GM12878 (cell line): ENCODE measurements at regions of chr9 and their contacts with region 1.

Region 1: DNA sequence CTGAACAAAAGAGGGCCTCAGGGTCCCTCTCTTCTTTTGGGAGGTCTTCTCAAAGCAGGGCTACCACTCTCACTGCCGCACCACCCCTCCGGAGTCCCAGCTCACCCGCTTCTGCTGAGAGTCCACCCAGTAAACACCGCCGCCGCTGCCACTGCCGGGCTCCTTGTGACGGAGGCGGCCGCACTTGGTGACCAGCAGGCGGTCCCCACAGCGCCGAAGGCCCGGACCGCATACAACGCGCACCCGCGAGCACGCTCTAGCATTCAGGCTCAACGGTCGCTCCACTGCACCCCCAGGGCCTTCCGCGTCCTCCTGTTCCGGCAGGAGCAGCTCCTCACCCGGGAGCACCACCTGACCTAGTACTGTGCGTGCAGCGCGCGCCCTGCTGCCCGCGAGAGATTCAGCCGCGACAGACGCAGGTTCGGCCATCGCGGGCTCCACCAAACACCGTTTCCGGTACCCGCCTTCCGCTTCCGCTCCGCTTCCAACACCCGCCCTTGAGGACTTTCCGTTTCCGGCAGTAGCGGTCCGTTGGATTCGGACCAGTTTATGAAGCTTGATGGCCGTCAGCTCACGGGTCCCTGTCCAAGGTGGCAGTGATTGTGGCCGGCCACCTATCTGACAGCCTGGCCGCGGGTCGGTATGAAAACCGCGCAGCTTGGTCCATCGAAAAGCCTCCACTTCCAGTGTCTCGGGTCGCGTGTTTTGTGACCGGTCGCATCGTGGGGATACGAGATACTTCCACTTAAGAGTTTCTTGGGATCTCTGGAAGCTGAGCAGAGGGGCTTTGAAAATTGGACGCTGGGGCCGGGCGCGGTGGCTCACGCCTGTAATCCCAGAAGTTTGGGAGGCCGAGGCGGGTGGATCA is at the start of gene EXOSC3:
- DNase-seq: peak; percentile 62
- ATAC-seq: peak; percentile 93
- H3K4me3 ChIP-seq: peak within 1 kb of the TSS; percentile 77
- H3K27ac ChIP-seq: peak within 1 kb of the TSS; percentile 88
- H3K4me1 ChIP-seq: no peaks in the 10 kb centered on the region
- H3K27me3 ChIP-seq: no peaks in the 10 kb centered on the region
- CTCF ChIP-seq: peak in 2 of 3 experiments; percentile 6 to 14; a peak in 2 of 6 replicates
- EP300 ChIP-seq: no peak
- POLR2A ChIP-seq: peak; percentile 100
- RAD21 ChIP-seq: no peak
- polyA plus RNA-seq, gene EXOSC3: 8.2 to 20.3 TPM

Region 2: GRCh38 chr9:37582548-37583157 is 202.2 kb before region 1 on chr9:
- CTCF ChIA-PET with region 1: interaction called, 4 read pairs
- POLR2A ChIA-PET with region 1: no interaction called
- RAD21 ChIA-PET with region 1: no interaction called
- SMC1A ChIA-PET with region 1: no interaction called
- in situ Hi-C with region 1: no loop called
- intact Hi-C with region 1: loop called (anchors 1 kb)
- DNase-seq: no peak
- ATAC-seq: peak; percentile 77
- H3K4me3 ChIP-seq: no peak overlapping the region
- H3K27ac ChIP-seq: no peak overlapping the region
- H3K4me1 ChIP-seq: no peaks in the 10 kb centered on the region
- H3K27me3 ChIP-seq: no peaks in the 10 kb centered on the region
- CTCF ChIP-seq: peak; percentile 58 to 69 (median 69); a peak in 5 of 6 replicates
- EP300 ChIP-seq: no peak
- POLR2A ChIP-seq: no peak
- RAD21 ChIP-seq: peak; percentile 68

Region 3: DNA sequence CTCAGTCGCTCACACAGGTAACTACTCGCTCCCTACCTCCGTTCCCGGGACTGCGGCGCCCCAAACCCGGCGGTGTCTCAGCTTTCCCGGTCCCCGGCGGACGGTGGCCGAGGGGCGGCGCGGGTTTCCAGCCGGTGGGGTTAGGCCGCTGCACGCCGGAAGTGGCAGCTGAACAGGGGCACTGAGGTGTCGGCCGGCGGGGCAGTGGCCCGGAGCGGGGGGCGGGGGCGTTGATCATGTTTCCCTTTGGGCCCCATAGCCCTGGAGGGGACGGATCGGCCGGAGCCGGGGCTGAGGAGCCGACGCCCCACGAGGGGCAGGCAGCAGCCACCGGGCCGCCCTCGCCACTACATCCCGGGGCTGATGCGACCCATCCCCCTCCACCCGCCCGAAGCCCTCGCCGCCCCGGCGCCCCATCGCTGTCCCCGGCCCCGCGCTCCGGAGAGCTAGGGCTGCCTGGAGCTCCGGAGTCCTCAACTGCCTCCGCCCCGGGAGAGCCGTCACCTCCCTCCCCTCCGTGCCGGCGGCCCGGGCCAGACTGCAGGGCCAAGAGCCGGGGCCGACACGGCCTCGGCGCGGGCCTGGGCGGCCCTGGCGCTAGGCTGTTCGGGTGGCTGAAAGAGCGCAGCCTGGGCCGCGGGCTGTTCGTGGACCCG is 15.9 kb after region 1 on chr9 and contains the start of gene DCAF10:
- CTCF ChIA-PET with region 1: interaction called, 13 read pairs
- POLR2A ChIA-PET with region 1: interaction called, 10 read pairs
- RAD21 ChIA-PET with region 1: interaction called, 11 read pairs
- SMC1A ChIA-PET with region 1: interaction called, 5 read pairs
- in situ Hi-C with region 1: no loop called
- intact Hi-C with region 1: loop called (anchors 2 kb)
- DNase-seq: peak; percentile 40
- ATAC-seq: peak; percentile 89
- H3K4me3 ChIP-seq: peak within 1 kb of the TSS; percentile 80
- H3K27ac ChIP-seq: peak within 1 kb of the TSS; percentile 83
- H3K4me1 ChIP-seq: peaks cover 10% of the 10 kb centered on the region; the same call in 1 of the 2 replicates
- H3K27me3 ChIP-seq: no peaks in the 10 kb centered on the region
- CTCF ChIP-seq: no peak
- EP300 ChIP-seq: 0 out of 4 replicates have a peak, but pooled peaks have one; percentile 17 to 37
- POLR2A ChIP-seq: peak; percentile 95
- RAD21 ChIP-seq: no peak
- polyA plus RNA-seq, gene DCAF10: 3.9 TPM

Region 4: DNA sequence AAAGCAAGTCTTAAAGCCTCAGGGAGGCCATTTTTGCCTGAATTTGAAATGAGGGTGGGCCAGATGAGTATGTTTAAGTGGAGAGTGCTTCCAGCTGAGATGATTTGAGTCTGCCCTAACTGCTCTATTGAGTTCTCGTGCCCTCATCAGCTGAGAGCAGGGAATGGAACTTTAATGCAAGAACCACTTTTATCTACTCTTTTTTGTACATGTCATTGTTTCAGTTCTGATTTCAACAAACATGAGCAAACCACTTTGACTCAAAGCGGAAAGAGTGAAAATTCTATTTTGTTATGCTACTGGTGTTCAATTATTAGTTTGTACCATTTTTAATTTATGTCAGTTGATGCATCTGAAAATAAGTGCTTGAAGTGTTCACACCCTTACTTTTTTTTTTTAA is 51.5 kb after region 1 on chr9:
- CTCF ChIA-PET with region 1: no interaction called
- POLR2A ChIA-PET with region 1: interaction called, 3 read pairs
- RAD21 ChIA-PET with region 1: no interaction called
- SMC1A ChIA-PET with region 1: no interaction called
- in situ Hi-C with region 1: no loop called
- intact Hi-C with region 1: loop called (anchors 5 kb)
- DNase-seq: peak; percentile 44
- ATAC-seq: peak; percentile 98
- H3K4me3 ChIP-seq: no peak overlapping the region
- H3K27ac ChIP-seq: no peak overlapping the region; the same call in 1 of the 2 replicates
- H3K4me1 ChIP-seq: peaks cover 8% of the 10 kb centered on the region
- H3K27me3 ChIP-seq: no peaks in the 10 kb centered on the region
- CTCF ChIP-seq: peak in 2 of 3 experiments; percentile 2 to 19; a peak in 1 of 6 replicates
- EP300 ChIP-seq: no peak
- POLR2A ChIP-seq: no peak
- RAD21 ChIP-seq: peak; percentile 37